ENCODE measurements at regions of chr13 and their contacts with region 1.

Region 1: GRCh38 chr13:94710881-94711560 is 1.3 kb downstream of the SOX21 start:
- DNase-seq: peak; percentile 21 to 62 (median 54)
- ATAC-seq: peak; percentile 81
- H3K4me3 ChIP-seq: no peak overlapping the region
- H3K27ac ChIP-seq: no peak overlapping the region
- H3K4me1 ChIP-seq: peaks cover 2 to 37% of the 10 kb centered on the region in 2 experiments; a peak in 2 of 5 replicates
- H3K27me3 ChIP-seq: peaks cover 27 to 38% of the 10 kb centered on the region in 2 experiments; a peak in 4 of 5 replicates
- CTCF ChIP-seq: peak in 2 of 3 experiments; percentile 18 to 35; a peak in 2 of 6 replicates
- EP300 ChIP-seq: no peak
- POLR2A ChIP-seq: no peak
- RAD21 ChIP-seq: peak in 1 of 2 experiments; percentile 13; a peak in 1 of 4 replicates

Region 2: GRCh38 chr13:94620286-94620896 is 90.6 kb before region 1 on chr13:
- CTCF ChIA-PET with region 1: no interaction called
- POLR2A ChIA-PET with region 1: no interaction called
- in situ Hi-C with region 1: no loop called
- intact Hi-C with region 1: loop called (anchors 1 kb)
- DNase-seq: peak; percentile 30 to 68 (median 34)
- ATAC-seq: peak; percentile 87
- H3K4me3 ChIP-seq: no peak overlapping the region
- H3K27ac ChIP-seq: no peak overlapping the region
- H3K4me1 ChIP-seq: no peaks in the 10 kb centered on the region
- H3K27me3 ChIP-seq: no peaks in the 10 kb centered on the region
- CTCF ChIP-seq: peak; percentile 60 to 73 (median 64)
- EP300 ChIP-seq: no peak
- POLR2A ChIP-seq: no peak
- RAD21 ChIP-seq: peak; percentile 56 to 79

Region 3: GRCh38 chr13:94674609-94675348 is 36.2 kb before region 1 on chr13:
- CTCF ChIA-PET with region 1: no interaction called
- POLR2A ChIA-PET with region 1: no interaction called
- in situ Hi-C with region 1: no loop called
- intact Hi-C with region 1: loop called (anchors 2 kb)
- DNase-seq: peak; percentile 61 to 78 (median 64)
- ATAC-seq: peak; percentile 91
- H3K4me3 ChIP-seq: no peak overlapping the region
- H3K27ac ChIP-seq: no peak overlapping the region
- H3K4me1 ChIP-seq: peaks cover 5 to 6% of the 10 kb centered on the region in 2 experiments; a peak in 3 of 5 replicates
- H3K27me3 ChIP-seq: no peaks in the 10 kb centered on the region
- CTCF ChIP-seq: peak; percentile 66 to 75 (median 67)
- EP300 ChIP-seq: no peak
- POLR2A ChIP-seq: no peak
- RAD21 ChIP-seq: peak; percentile 48 to 62

Measured in K562 (cell line).